ENCODE measurements at regions of chr2 and their contacts with region 1.

Region 1: DNA sequence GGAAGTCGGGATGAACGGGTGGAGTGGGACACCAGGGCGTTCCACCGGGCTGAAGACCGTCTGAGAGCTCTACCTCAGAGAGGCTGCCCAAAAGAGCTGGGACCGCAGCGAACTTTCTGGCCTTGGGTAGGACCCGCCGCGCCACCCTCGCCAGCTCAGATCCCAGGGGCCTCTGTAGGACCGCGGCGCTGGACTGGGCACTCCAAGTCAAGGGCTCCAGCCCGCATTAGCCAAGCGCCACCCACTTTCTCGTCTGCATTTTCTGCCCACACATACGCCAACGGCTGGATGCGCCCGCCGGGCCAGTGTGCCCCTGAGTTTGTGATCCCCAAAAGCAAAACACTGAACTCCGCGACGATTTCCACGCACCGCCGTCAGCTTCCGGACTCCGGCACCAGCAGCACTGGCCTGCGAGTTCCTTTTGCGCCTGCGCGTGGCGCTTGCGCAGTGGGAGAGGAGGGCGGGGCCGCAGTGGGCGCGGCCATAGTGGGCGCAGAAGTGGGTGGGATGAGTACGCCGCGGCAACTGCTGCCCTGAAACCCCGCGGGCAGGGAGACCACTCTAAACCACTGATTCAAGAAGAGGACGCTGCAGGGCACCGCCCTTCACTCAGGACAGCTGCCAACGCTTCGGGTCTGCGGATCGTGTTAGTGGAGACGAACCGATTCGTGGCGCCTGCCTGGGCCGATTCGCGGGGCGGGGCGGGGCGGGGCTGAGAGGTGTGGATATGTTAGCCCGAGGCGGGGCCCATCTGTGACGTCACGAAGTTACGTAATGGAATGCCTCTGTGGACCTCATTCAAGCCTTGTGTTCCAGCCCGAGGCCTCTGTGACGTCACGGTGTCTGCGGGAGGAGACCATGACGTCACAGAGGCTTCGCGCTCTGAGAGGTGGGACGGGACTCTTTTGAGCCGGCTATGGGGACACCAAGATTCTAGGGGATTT is 10.5 kb downstream of the OSR1 start:
- DNase-seq: peak; percentile 96
- H3K4me3 Mint-ChIP-seq: peak overlapping the region; percentile 95
- H3K27ac Mint-ChIP-seq: peak overlapping the region; percentile 99
- H3K4me1 Mint-ChIP-seq: no peaks in the 10 kb centered on the region
- H3K27me3 Mint-ChIP-seq: no peaks in the 10 kb centered on the region
- CTCF ChIP-seq: no peak

Region 2: GRCh38 chr2:19228715-19229114 is 119.2 kb before region 1 on chr2:
- CTCF ChIA-PET with region 1: interaction called, 3 read pairs
- POLR2A ChIA-PET with region 1: interaction called, 29 read pairs
- intact Hi-C with region 1: no loop called
- DNase-seq: peak; percentile 86
- H3K4me3 Mint-ChIP-seq: peak overlapping the region; percentile 56
- H3K27ac Mint-ChIP-seq: peak overlapping the region; percentile 81
- H3K4me1 Mint-ChIP-seq: peaks cover 33% of the 10 kb centered on the region
- H3K27me3 Mint-ChIP-seq: no peaks in the 10 kb centered on the region
- CTCF ChIP-seq: no peak

Region 3: DNA sequence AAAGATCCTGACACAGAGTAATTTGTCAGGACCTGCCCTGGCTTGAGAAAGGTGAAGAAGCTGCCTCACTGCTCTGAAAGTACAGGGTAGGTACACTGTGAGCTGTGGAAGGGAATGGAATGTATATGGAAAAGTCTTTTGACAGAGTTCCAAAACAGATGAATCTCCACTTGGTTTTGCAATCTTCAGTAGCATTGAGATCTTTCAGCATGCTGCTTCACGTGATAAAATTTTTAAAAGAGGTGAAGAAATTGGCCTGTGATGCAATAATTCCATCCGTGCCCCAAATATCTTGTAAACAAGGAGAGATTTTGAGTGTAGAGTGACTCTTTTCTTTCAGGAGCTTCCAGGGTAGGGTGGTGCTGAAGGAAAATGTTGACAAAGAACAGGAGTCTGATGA is 112.6 kb before region 1 on chr2:
- CTCF ChIA-PET with region 1: no interaction called
- POLR2A ChIA-PET with region 1: interaction called, 29 read pairs
- intact Hi-C with region 1: loop called (anchors 2 kb)
- DNase-seq: peak; percentile 93
- H3K4me3 Mint-ChIP-seq: peak overlapping the region; percentile 54
- H3K27ac Mint-ChIP-seq: peak overlapping the region; percentile 95
- H3K4me1 Mint-ChIP-seq: peaks cover 44% of the 10 kb centered on the region
- H3K27me3 Mint-ChIP-seq: no peaks in the 10 kb centered on the region
- CTCF ChIP-seq: no peak

Region 4: DNA sequence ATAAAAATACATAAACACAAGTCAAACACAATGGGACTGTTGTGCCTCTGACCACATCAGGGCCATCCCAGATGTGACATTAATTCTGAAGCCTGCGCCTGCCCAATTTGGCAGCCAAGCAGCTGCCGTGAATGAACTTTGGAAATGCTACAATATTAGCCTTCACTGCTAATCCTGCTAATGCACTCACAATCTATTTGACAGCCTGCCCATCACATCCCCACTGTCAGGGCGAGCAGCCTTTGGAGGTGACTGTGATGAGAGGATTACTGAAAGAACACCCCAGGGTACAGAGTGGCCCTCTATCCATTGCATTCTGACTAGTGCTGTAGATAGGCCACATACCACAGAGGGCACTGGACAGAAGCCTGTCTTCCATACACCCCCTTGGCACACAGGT is 11.1 kb before region 1 on chr2:
- CTCF ChIA-PET with region 1: interaction called, 3 read pairs
- POLR2A ChIA-PET with region 1: interaction called, 11 read pairs
- intact Hi-C with region 1: no loop called
- DNase-seq: no peak
- H3K4me3 Mint-ChIP-seq: no peak overlapping the region
- H3K27ac Mint-ChIP-seq: no peak overlapping the region
- H3K4me1 Mint-ChIP-seq: no peaks in the 10 kb centered on the region
- H3K27me3 Mint-ChIP-seq: no peaks in the 10 kb centered on the region
- CTCF ChIP-seq: no peak

Region 5: DNA sequence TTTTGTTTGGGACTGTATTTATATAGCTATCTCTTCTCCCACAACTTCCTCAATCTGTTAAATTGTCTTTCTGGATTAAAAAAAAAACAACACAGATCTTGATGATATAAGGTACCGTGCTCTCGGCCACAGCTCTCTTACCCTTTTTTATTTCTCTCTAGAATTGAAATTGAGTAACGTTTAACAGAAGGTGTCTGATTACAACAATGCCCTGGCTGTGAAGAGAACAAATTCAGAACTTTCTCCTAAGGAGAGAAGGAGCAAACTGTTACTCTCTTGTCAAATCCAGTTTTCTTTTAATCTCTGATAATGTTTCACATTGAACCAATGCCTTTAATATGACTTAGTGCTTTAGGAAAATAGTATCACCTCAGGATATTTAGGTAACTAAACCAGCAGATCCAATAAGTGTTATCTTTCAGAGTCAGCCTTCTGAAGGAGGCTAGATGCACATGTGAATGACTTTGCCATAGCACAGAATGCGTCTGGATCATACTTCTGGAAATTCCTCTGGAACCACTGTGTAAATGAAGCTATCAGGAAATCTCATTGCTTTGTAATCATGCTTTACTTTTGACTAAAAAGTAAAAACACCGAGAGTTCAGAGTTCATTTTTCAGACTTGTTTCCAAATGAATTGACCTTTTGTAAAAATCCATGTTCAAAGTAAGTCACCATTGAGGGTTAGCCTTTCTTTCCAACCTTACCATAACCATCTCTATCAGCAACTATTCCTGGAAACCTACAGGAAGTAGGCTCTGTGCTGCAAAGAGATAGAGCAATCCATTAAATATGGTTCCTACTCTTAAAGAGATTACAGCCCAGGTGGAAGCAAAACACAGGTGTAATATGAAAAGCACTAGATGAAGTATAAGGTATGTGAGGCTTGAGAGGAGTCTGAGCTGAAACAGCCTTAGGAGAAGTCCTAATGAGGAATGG is 157.6 kb after region 1 on chr2:
- CTCF ChIA-PET with region 1: no interaction called
- POLR2A ChIA-PET with region 1: no interaction called
- intact Hi-C with region 1: no loop called
- DNase-seq: peak; percentile 6
- H3K4me3 Mint-ChIP-seq: no peak overlapping the region
- H3K27ac Mint-ChIP-seq: no peak overlapping the region
- H3K4me1 Mint-ChIP-seq: peaks cover 6% of the 10 kb centered on the region
- H3K27me3 Mint-ChIP-seq: no peaks in the 10 kb centered on the region
- CTCF ChIP-seq: no peak

Measured in MCF 10A (cell line).